ENCODE measurements at regions of chr17 and their contacts with region 1.

Region 1: GRCh38 chr17:29807520-29808351 is 122.3 kb downstream of the SSH2 start:
- DNase-seq: no peak
- H3K4me3 ChIP-seq: no peak overlapping the region
- H3K27ac ChIP-seq: no peak overlapping the region
- H3K4me1 ChIP-seq: no peaks in the 10 kb centered on the region
- H3K27me3 ChIP-seq: no peaks in the 10 kb centered on the region
- CTCF ChIP-seq: peak; percentile 72 to 75 (median 75)
- EP300 ChIP-seq: no peak
- POLR2A ChIP-seq: no peak

Region 2: GRCh38 chr17:29883497-29883896 is 75.8 kb after region 1 on chr17:
- intact Hi-C with region 1: no loop called
- DNase-seq: no peak
- H3K4me3 ChIP-seq: no peak overlapping the region
- H3K27ac ChIP-seq: no peak overlapping the region
- H3K4me1 ChIP-seq: peaks cover 4 to 7% (median 6%) of the 10 kb centered on the region in 4 donors
- H3K27me3 ChIP-seq: no peaks in the 10 kb centered on the region
- CTCF ChIP-seq: no peak
- EP300 ChIP-seq: no peak
- POLR2A ChIP-seq: no peak

Region 3: GRCh38 chr17:30093463-30094147 is 285.9 kb after region 1 on chr17:
- intact Hi-C with region 1: loop called (anchors 10 kb)
- DNase-seq: peak; percentile 78
- H3K4me3 ChIP-seq: no peak overlapping the region
- H3K27ac ChIP-seq: no peak overlapping the region
- H3K4me1 ChIP-seq: peaks cover 5 to 11% (median 6%) of the 10 kb centered on the region in 4 donors
- H3K27me3 ChIP-seq: peaks cover 0 to 23% (median 0%) of the 10 kb centered on the region in 4 donors
- CTCF ChIP-seq: peak; percentile 74 to 89 (median 80)
- EP300 ChIP-seq: no peak
- POLR2A ChIP-seq: no peak